Activated T-helper 2 cell treated with anti-CD3 and anti-CD28 coated beads, Interferon-gamma antibody, Interleukin-2, Interleukin-4, amounts not matched to agents 10 μg/mL and 5 μg/mL and 100 μg/mL, durations not matched to agents 14 hours and 24 hours and 36 hours (primary cell): ENCODE measurements at regions of chr5 and their contacts with region 1.

Region 1: GRCh38 chr5:75053304-75054133 is 1.2 kb upstream of the GCNT4 start:
- DNase-seq: peak; percentile 36
- H3K4me3 Mint-ChIP-seq: peak overlapping the region; percentile 80
- H3K27ac Mint-ChIP-seq: no peak overlapping the region
- H3K4me1 Mint-ChIP-seq: peaks cover 42% of the 10 kb centered on the region
- H3K27me3 Mint-ChIP-seq: peaks cover 48% of the 10 kb centered on the region

Region 2: GRCh38 chr5:74576941-74577456 is 476.5 kb before region 1 on chr5:
- intact Hi-C with region 1: loop called (anchors 5 kb)
- DNase-seq: peak; percentile 17
- H3K4me3 Mint-ChIP-seq: peak overlapping the region; percentile 56
- H3K27ac Mint-ChIP-seq: peak overlapping the region; percentile 24
- H3K4me1 Mint-ChIP-seq: peaks cover 41% of the 10 kb centered on the region
- H3K27me3 Mint-ChIP-seq: peaks cover 23% of the 10 kb centered on the region

Region 3: GRCh38 chr5:74934949-74935751 is 118.4 kb before region 1 on chr5:
- intact Hi-C with region 1: loop called (anchors 5 kb)
- DNase-seq: peak; percentile 11
- H3K4me3 Mint-ChIP-seq: peak overlapping the region; percentile 33
- H3K27ac Mint-ChIP-seq: peak overlapping the region; percentile 48
- H3K4me1 Mint-ChIP-seq: peaks cover 31% of the 10 kb centered on the region
- H3K27me3 Mint-ChIP-seq: peaks cover 25% of the 10 kb centered on the region

Region 4: DNA sequence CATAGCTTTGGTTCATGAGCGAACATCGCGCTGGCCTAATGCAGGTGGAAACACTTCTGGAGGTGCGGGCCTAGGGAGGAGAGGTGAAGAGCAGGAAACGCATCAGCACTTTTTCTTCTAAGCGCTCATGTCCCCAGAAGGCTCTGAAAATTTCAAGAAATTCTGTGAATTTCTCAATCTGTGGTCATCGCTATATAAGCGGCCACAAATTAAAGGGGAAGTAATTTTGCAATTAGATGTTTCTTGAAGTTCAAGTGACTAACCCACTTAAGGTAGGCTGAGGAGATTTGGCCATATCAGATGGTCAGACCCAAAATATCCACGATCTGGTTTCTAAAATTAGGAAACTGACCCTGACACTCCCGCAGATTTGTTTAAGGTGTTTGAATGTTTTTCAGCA is 266.8 kb after region 1 on chr5:
- intact Hi-C with region 1: loop called (anchors 5 kb)
- DNase-seq: no peak
- H3K4me3 Mint-ChIP-seq: no peak overlapping the region
- H3K27ac Mint-ChIP-seq: peak overlapping the region; percentile 77
- H3K4me1 Mint-ChIP-seq: peaks cover 24% of the 10 kb centered on the region
- H3K27me3 Mint-ChIP-seq: no peaks in the 10 kb centered on the region

Region 5: DNA sequence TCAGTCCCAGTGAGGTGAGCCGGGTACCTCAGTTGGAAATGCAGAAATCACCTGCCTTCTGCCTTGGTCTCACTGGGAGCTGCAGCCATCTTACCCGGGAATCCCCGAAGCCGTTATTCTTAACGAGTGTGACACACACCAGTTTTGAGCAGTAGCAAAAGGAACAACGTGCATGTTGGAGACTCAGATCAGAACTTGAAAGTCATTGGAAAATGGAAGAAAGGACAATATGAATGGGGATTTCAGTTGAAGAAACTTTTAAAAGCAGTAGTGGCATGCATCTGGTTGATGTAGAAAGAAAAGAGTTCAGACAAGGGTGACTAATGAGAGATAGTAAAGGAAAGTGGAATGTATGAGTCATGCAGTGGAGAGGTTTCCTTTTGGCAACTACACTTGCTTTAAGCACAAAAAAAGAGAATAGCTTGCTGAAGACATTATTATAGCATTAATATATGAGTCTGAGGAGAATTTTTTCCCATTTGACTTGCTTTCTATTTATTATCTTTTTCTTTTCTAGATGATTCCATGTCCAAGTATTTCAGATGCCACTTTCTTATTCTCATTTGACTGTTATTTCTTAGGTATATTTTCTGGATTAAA is 513.3 kb after region 1 on chr5:
- intact Hi-C with region 1: loop called (anchors 2 kb)
- DNase-seq: peak; percentile 30
- H3K4me3 Mint-ChIP-seq: peak overlapping the region; percentile 20
- H3K27ac Mint-ChIP-seq: peak overlapping the region; percentile 96
- H3K4me1 Mint-ChIP-seq: peaks cover 43% of the 10 kb centered on the region
- H3K27me3 Mint-ChIP-seq: no peaks in the 10 kb centered on the region

Region 6: DNA sequence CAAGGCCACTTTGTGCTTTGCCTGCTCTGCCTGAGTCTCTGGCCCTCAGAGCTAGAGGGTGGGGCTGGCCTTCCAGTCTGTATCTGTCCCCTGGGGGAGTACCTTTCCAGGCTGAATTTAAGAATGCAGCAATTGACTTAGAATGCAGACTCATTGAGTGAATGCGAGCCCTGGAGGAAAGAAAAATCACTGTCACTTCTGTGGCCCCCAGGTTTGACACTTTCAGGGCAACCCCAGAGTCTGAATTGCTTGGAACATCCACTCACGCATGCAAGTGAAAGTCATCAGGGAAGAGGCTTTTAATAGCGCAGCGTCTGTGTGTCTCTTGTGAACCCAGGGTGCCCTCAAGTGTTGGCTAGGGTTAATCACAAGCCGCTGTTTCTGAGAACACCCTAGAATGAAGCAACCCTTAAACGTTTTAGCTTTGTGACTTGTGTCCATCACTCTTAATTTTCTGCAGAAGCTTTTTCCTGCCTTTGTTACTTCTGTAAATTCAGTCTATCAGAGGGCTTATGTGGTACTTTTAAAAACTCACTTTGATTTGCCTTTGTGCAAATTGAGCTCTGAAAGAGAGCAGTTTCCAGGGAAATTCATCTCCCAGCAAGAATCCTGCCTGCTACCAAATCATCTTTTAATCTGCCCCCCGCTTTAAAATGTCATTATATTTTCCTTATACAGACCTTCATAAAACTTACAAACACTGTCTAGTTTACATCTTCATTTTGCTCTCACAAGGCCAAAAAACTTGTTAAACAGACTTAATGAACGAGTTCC is 1202.8 kb after region 1 on chr5:
- intact Hi-C with region 1: loop called (anchors 10 kb)
- DNase-seq: peak; percentile 44
- H3K4me3 Mint-ChIP-seq: no peak overlapping the region
- H3K27ac Mint-ChIP-seq: no peak overlapping the region
- H3K4me1 Mint-ChIP-seq: peaks cover 7% of the 10 kb centered on the region
- H3K27me3 Mint-ChIP-seq: peaks cover 33% of the 10 kb centered on the region